ENCODE measurements at regions of chr15 and their contacts with region 1.

Region 1: DNA sequence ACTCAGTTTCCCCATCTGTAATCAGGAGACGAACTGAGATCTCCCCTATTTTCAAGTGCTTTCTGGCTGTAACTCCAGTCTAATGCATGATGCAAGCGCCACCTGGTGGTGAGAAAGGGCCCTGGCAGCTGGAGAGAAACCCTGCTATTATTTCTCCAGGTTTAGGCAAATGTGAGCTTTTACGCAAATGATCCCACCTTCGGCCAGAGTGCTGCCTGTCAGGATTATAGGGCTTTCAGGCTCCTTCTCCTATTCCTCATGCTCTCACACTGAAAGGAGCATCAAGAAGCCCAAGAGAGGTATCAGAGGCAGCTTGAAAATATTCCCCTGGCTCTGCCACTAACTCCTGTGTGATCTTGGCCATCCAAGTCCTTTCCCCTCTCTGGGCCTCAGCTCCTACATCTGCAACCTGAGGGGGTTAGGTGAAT is 93.9 kb upstream of the RASGRF1 start:
- DNase-seq: peak in 1 of 2 experiments; percentile 87
- H3K4me3 ChIP-seq: no peak overlapping the region
- H3K27ac ChIP-seq: no peak overlapping the region
- H3K4me1 ChIP-seq: no peaks in the 10 kb centered on the region; a peak in 1 of 7 replicates
- H3K27me3 ChIP-seq: no peaks in the 10 kb centered on the region; a peak in 2 of 7 replicates
- CTCF ChIP-seq: peak; percentile 79 to 97 (median 96)
- EP300 ChIP-seq: no peak
- POLR2A ChIP-seq: no peak
- RAD21 ChIP-seq: peak; percentile 94 to 97

Region 2: GRCh38 chr15:78909791-78910228 is 274.7 kb before region 1 on chr15:
- CTCF ChIA-PET with region 1: interaction called, 32 read pairs
- POLR2A ChIA-PET with region 1: no interaction called
- DNase-seq: peak in 1 of 2 experiments; percentile 79
- H3K4me3 ChIP-seq: no peak overlapping the region
- H3K27ac ChIP-seq: no peak overlapping the region
- H3K4me1 ChIP-seq: peaks cover 0 to 3% (median 1%) of the 10 kb centered on the region in 4 experiments; a peak in 3 of 7 replicates
- H3K27me3 ChIP-seq: no peaks in the 10 kb centered on the region
- CTCF ChIP-seq: peak; percentile 59 to 93 (median 86)
- EP300 ChIP-seq: no peak
- POLR2A ChIP-seq: no peak
- RAD21 ChIP-seq: peak; percentile 89 to 90

Region 3: GRCh38 chr15:79051029-79051428 is 133.4 kb before region 1 on chr15:
- CTCF ChIA-PET with region 1: interaction called, 17 read pairs
- POLR2A ChIA-PET with region 1: no interaction called
- DNase-seq: no peak
- H3K4me3 ChIP-seq: no peak overlapping the region
- H3K27ac ChIP-seq: no peak overlapping the region
- H3K4me1 ChIP-seq: no peaks in the 10 kb centered on the region; a peak in 1 of 7 replicates
- H3K27me3 ChIP-seq: peaks cover 0 to 7% (median 2%) of the 10 kb centered on the region in 4 experiments; a peak in 3 of 7 replicates
- CTCF ChIP-seq: no peak
- EP300 ChIP-seq: no peak
- POLR2A ChIP-seq: no peak
- RAD21 ChIP-seq: no peak

Region 4: DNA sequence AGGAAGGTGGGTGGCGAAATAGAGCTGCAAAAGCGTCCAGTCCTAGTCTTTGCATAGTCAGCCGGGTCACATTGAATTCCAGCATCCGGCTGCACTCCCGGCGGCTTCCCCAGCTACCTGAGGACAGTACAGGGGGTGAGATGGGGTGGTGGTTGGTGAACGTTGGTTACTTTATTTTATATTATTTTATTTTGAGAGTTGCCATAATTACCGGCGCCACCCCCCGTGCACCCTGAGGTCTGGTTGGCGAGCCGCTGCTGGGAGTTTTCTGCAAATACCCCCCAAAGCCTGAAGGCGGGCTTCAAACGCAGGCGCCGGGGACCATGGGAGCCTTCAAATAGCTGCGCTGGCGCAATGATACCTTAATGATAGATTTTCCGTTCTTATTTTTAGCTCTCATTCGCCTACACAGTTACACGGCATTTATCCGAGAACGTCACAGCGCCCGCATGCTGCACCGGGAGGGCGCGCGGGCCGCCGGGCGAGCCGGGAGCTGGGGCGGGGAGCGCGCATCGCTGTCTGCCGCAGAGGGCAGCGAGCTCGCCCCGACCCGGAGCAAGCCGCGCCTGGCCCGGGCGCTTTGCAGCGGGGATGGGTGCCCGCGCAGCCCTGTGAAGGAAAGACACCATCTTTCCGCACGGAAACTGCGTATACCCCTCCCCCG is 93.1 kb before region 1 on chr15:
- CTCF ChIA-PET with region 1: interaction called, 14 read pairs
- POLR2A ChIA-PET with region 1: no interaction called
- DNase-seq: peak in 1 of 2 experiments; percentile 67
- H3K4me3 ChIP-seq: peak overlapping the region; percentile 43 to 65 (median 46)
- H3K27ac ChIP-seq: no peak overlapping the region
- H3K4me1 ChIP-seq: peaks cover 0 to 19% (median 11%) of the 10 kb centered on the region in 4 experiments; a peak in 6 of 7 replicates
- H3K27me3 ChIP-seq: peaks cover 54 to 81% (median 77%) of the 10 kb centered on the region in 4 experiments
- CTCF ChIP-seq: no peak
- EP300 ChIP-seq: no peak
- POLR2A ChIP-seq: no peak
- RAD21 ChIP-seq: no peak

Region 5: GRCh38 chr15:79122991-79123390 is 61.5 kb before region 1 on chr15:
- CTCF ChIA-PET with region 1: interaction called, 14 read pairs
- POLR2A ChIA-PET with region 1: no interaction called
- DNase-seq: no peak
- H3K4me3 ChIP-seq: no peak overlapping the region
- H3K27ac ChIP-seq: no peak overlapping the region
- H3K4me1 ChIP-seq: no peaks in the 10 kb centered on the region
- H3K27me3 ChIP-seq: no peaks in the 10 kb centered on the region
- CTCF ChIP-seq: no peak
- EP300 ChIP-seq: no peak
- POLR2A ChIP-seq: no peak
- RAD21 ChIP-seq: no peak

Region 6: DNA sequence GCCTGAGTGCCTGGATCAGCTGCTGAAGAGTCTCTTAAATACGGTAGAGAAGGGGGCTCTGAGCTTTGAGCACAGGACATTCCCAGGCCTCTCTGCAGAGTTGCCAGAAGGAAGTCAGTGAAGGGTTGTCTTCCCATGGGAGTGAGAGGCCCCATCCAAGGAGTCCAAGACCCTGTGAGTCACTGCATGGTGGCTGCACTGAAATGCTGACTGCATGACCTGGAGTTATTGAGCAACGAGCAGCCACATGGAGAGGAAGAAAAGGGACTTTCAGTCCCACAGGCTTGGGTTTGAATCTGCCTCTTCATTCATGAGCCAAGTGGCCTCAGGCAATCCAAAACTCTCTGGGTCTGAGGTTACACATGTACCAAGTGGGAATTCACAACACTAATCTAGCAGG is 24.3 kb before region 1 on chr15:
- CTCF ChIA-PET with region 1: interaction called, 20 read pairs
- POLR2A ChIA-PET with region 1: no interaction called
- DNase-seq: no peak
- H3K4me3 ChIP-seq: no peak overlapping the region
- H3K27ac ChIP-seq: no peak overlapping the region
- H3K4me1 ChIP-seq: no peaks in the 10 kb centered on the region
- H3K27me3 ChIP-seq: peaks cover 0 to 3% (median under 1%) of the 10 kb centered on the region in 4 experiments; a peak in 2 of 7 replicates
- CTCF ChIP-seq: no peak
- EP300 ChIP-seq: no peak
- POLR2A ChIP-seq: no peak
- RAD21 ChIP-seq: no peak

Measured in H1 (cell line).